CD4-positive, alpha-beta memory T cell (primary cell): ENCODE measurements at regions of chr12 and their contacts with region 1.

Region 1: GRCh38 chr12:46585854-46586621 is 213.5 kb upstream of the SLC38A2 start:
- DNase-seq: peak; percentile 54 to 71 (median 62)
- H3K4me3 ChIP-seq: peak overlapping the region in 1 of 2 donors; percentile 16
- H3K4me3 Mint-ChIP-seq: peak overlapping the region; percentile 53 to 78 (median 71)
- H3K27ac ChIP-seq: no peak overlapping the region
- H3K27ac Mint-ChIP-seq: peak overlapping the region; percentile 65 to 93 (median 83)
- H3K4me1 ChIP-seq: peaks cover 21% of the 10 kb centered on the region
- H3K4me1 Mint-ChIP-seq: peaks cover 51 to 73% (median 63%) of the 10 kb centered on the region in 4 donors
- H3K27me3 ChIP-seq: no peaks in the 10 kb centered on the region
- H3K27me3 Mint-ChIP-seq: no peaks in the 10 kb centered on the region

Region 2: DNA sequence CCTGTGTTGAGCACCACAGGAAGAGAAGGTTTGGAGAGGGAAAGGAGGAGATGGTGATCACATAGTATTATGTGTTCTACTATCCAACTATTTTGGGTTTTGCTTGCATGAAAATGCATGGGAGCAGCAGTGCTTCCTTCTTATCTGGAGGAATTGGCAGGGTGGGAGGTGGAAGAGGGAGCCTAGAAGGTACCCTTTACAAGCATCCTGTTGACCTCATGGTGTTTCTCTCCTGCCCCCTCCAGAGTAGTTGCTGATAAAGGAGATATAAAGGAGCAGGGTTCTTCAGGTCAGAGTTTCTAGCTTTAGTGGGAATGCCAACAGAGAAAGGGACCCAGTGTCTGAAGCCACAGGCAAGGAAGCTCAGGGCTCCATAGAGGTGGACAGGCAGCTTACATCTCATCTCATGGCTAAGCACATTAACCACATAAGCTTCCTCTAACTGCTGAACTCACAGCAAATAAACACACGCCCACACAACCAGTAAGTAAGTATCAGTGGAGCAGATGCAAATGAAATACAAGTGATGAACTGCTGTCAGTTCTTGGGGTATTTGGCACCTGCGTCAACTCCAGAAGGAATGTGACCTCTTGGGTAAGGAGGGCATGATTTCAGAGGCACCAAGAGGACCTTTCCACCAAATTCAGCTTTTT is 39.3 kb before region 1 on chr12:
- CTCF ChIA-PET with region 1: no interaction called
- POLR2A ChIA-PET with region 1: interaction called, 11 read pairs
- intact Hi-C with region 1: no loop called
- DNase-seq: peak in 3 of 5 donors; percentile 5 to 12 (median 7)
- H3K4me3 ChIP-seq: no peak overlapping the region
- H3K4me3 Mint-ChIP-seq: peak overlapping the region in 5 of 8 donors; percentile 40 to 71 (median 60)
- H3K27ac ChIP-seq: no peak overlapping the region
- H3K27ac Mint-ChIP-seq: peak overlapping the region in 5 of 7 donors; percentile 20 to 76 (median 38)
- H3K4me1 ChIP-seq: peaks cover 30% of the 10 kb centered on the region
- H3K4me1 Mint-ChIP-seq: peaks cover 35 to 51% (median 42%) of the 10 kb centered on the region in 4 donors
- H3K27me3 ChIP-seq: no peaks in the 10 kb centered on the region
- H3K27me3 Mint-ChIP-seq: no peaks in the 10 kb centered on the region

Region 3: GRCh38 chr12:46608431-46609272 is 22.6 kb after region 1 on chr12:
- CTCF ChIA-PET with region 1: interaction called, 7 read pairs
- POLR2A ChIA-PET with region 1: interaction called, 24 read pairs
- intact Hi-C with region 1: no loop called
- DNase-seq: no peak
- H3K4me3 ChIP-seq: no peak overlapping the region
- H3K4me3 Mint-ChIP-seq: peak overlapping the region in 7 of 8 donors; percentile 57 to 78 (median 73)
- H3K27ac ChIP-seq: no peak overlapping the region
- H3K27ac Mint-ChIP-seq: peak overlapping the region; percentile 6 to 84 (median 58)
- H3K4me1 ChIP-seq: peaks cover 29% of the 10 kb centered on the region
- H3K4me1 Mint-ChIP-seq: peaks cover 33 to 65% (median 47%) of the 10 kb centered on the region in 4 donors
- H3K27me3 ChIP-seq: no peaks in the 10 kb centered on the region
- H3K27me3 Mint-ChIP-seq: no peaks in the 10 kb centered on the region